ENCODE measurements at regions of chr4 and their contacts with region 1.

Region 1: DNA sequence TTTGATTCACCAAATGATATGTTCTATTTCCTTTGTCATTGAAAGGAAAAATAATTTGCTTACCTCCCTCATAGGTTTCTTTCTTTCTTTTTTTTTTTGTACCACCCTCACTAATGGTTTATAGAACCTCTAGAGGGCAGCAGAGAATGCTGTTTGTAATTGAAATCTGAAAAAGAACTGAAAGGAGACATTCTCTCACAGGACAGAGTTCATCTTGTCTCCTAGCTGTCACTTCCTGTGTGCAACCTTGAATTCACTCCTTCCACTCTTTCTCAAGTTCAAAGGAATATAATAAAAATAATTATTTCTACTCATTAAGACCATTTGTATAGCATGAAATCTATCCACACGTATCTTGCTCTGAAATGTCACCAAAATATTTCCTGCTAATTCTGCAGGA is 51.0 kb downstream of the GUCY1B1 start:
- DNase-seq: no peak
- ATAC-seq: peak; percentile 65

Region 2: DNA sequence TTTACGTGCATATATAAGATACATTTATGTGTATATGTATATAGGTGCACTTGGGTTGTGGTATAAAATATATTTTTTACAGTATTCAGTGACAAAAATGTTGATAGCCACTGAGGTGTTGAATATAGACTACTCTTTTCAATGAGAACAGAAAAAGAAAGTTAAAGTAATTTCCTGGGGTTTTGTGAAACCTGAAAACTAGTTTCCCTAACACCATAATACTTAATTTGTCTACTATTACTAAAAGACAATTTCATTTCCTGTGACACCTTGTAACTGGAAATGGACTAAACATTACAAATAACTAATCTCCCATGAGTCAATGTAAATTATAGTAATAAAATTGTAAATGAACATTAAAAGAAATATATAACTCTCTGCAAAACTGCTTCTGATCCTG is 401.0 kb before region 1 on chr4:
- intact Hi-C with region 1: no loop called
- DNase-seq: no peak
- ATAC-seq: no peak

Region 3: GRCh38 chr4:155602351-155603140 is 207.3 kb before region 1 on chr4:
- intact Hi-C with region 1: no loop called
- DNase-seq: no peak
- ATAC-seq: no peak

Region 4: DNA sequence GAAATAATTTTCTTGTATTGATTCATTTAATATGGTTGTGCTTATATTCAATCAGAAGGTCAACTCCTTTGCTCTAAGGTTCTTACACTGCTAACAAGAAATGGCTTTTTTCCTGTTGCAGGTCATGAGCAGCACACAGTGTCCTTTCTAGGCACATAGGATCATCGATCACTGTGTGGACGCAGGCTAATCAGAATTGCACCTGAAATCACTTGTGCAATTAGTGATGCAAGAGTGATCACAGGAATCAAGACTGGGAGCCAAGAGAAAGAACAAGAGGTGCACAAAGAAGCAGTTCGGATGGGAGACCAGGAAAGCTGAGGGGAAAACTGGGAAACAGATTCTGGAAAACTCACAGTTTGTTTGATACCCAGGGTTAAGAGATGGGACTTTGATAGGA is 114.8 kb after region 1 on chr4:
- intact Hi-C with region 1: no loop called
- DNase-seq: no peak
- ATAC-seq: no peak

Region 5: GRCh38 chr4:155935389-155935986 is 125.7 kb after region 1 on chr4:
- intact Hi-C with region 1: no loop called
- DNase-seq: no peak
- ATAC-seq: no peak

Region 6: GRCh38 chr4:155946486-155946885 is 136.7 kb after region 1 on chr4:
- intact Hi-C with region 1: loop called in 1 of 2 experiments (anchors 5 kb)
- DNase-seq: no peak
- ATAC-seq: no peak

Measured in left colon (tissue), 2 donors.